K562 (cell line): ENCODE measurements at regions of chr12 and their contacts with region 1.

Region 1: DNA sequence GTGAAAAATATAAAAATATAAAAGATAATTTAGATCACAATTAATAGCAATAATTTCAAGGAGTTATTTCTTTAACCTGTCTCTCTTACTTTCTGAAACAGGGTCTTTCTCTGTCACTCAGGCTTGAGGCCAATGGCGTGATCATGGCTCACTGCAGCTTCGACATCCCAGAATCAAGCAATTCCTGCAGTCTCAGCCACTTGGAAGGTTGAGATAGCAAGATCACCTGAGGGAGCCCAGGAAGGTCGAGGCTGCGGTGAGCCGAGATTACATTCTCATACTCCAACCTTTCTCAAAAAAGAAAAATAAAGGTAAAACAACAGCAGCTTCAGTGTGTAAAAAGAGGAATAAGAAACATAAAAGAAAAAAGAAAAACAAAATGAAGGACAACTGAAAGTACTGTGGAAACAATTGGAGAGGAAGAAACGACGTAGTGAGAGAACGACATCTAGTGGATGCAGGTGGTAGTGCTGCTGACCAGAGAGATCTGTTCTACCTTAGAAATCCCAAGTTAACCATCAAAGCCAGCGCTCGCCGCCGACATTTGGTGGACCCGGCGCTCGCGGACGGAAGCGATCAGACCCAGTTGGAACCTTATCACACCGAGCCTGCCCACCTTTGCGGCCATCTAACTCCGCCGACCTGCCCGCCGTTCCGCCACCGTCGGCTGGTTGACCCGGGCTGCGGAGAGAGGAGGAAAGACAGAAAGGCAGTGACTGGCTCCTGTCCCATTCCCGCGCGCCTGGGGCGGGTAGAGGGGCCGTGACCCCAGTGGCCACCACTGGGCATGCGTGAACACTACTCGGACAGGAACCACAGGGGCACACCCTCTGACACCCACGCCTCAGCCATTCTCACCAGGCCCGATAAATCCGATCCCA is 196.1 kb downstream of the ALG10 start:
- DNase-seq: peak; percentile 46 to 78 (median 56)
- ATAC-seq: peak; percentile 90
- H3K4me3 ChIP-seq: 0 out of 2 replicates have a peak overlapping the region, but pooled peaks have one; percentile 19
- H3K27ac ChIP-seq: no peak overlapping the region
- H3K4me1 ChIP-seq: peaks cover 0 to 8% of the 10 kb centered on the region in 2 experiments; a peak in 2 of 5 replicates
- H3K27me3 ChIP-seq: no peaks in the 10 kb centered on the region; a peak in 1 of 5 replicates
- CTCF ChIP-seq: peak; percentile 79 to 91 (median 87)
- EP300 ChIP-seq: no peak
- POLR2A ChIP-seq: no peak
- RAD21 ChIP-seq: peak; percentile 68 to 88

Region 2: DNA sequence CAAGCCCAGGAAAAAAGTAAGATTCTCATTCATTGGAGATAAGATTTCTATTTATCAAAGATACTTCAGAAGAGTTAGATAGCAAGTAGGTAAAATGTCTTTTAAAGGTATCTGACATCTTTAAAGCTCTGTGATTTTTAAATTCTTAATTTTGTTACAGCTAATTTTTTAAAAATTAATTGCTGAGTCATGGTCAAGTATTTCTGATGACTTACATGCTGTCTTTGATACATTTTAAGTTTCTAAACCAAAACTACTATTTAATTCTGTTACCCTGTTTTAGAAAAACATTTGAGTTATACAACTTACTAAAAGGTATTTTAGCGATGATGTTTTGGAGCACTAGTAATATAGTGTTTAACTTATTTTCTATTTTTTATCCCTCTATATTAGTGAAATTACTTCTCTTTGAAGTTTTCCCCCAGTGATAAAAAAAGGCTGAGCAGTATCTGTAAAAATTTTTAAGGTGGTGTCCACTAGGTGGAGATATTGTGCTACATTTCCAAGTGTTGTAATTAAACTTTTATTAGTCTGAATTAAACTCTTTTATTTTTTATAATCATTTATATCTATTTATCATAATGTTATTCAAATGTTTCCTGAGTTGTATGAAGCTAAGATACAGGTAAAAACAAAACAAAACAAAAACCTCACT is 184.7 kb before region 1 on chr12:
- CTCF ChIA-PET with region 1: interaction called, 6 read pairs
- POLR2A ChIA-PET with region 1: no interaction called
- in situ Hi-C with region 1: no loop called
- intact Hi-C with region 1: loop called (anchors 1 kb)
- DNase-seq: peak; percentile 18 to 53 (median 24)
- ATAC-seq: no peak
- H3K4me3 ChIP-seq: no peak overlapping the region
- H3K27ac ChIP-seq: no peak overlapping the region
- H3K4me1 ChIP-seq: no peaks in the 10 kb centered on the region
- H3K27me3 ChIP-seq: no peaks in the 10 kb centered on the region
- CTCF ChIP-seq: peak in 2 of 3 experiments; percentile 27 to 59; a peak in 3 of 6 replicates
- EP300 ChIP-seq: no peak
- POLR2A ChIP-seq: no peak
- RAD21 ChIP-seq: peak; percentile 27 to 58; a peak in 2 of 4 replicates

Region 3: DNA sequence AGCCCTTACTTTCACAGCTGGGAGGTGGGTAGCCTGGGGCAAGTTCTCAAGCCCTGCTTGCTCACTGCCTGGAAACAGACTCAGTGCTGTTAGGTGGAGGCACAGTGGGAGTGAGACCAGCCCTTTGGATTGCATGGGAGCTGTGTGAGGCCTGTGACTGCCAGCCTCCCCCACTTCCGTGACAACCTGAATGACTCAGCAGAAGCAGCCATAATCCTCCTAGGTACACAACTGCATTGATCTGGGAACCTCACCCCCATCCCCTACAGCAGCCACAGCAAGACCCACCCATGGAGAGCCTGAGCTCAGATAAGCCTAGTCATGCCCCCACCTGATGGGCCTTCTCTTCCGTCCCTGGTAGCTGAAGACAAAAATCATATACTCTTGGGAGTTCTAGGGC is 169.7 kb before region 1 on chr12:
- CTCF ChIA-PET with region 1: no interaction called
- POLR2A ChIA-PET with region 1: no interaction called
- in situ Hi-C with region 1: loop called (anchors 5 kb)
- intact Hi-C with region 1: no loop called
- DNase-seq: no peak
- ATAC-seq: no peak
- H3K4me3 ChIP-seq: no peak overlapping the region
- H3K27ac ChIP-seq: no peak overlapping the region
- H3K4me1 ChIP-seq: no peaks in the 10 kb centered on the region
- H3K27me3 ChIP-seq: no peaks in the 10 kb centered on the region
- CTCF ChIP-seq: no peak
- EP300 ChIP-seq: no peak
- POLR2A ChIP-seq: no peak
- RAD21 ChIP-seq: no peak

Region 4: GRCh38 chr12:34292736-34293625 is 74.6 kb after region 1 on chr12:
- CTCF ChIA-PET with region 1: no interaction called
- POLR2A ChIA-PET with region 1: no interaction called
- in situ Hi-C with region 1: no loop called
- intact Hi-C with region 1: loop called (anchors 5 kb)
- DNase-seq: peak; percentile 37 to 73 (median 42)
- ATAC-seq: peak; percentile 88
- H3K4me3 ChIP-seq: no peak overlapping the region
- H3K27ac ChIP-seq: no peak overlapping the region
- H3K4me1 ChIP-seq: peaks cover 0 to 16% of the 10 kb centered on the region in 2 experiments; a peak in 2 of 5 replicates
- H3K27me3 ChIP-seq: peaks cover 6 to 29% of the 10 kb centered on the region in 2 experiments; a peak in 3 of 5 replicates
- CTCF ChIP-seq: peak; percentile 62 to 70 (median 63)
- EP300 ChIP-seq: no peak
- POLR2A ChIP-seq: no peak
- RAD21 ChIP-seq: peak in 1 of 2 experiments; percentile 48; a peak in 2 of 4 replicates

Region 5: GRCh38 chr12:34600592-34601462 is 382.4 kb after region 1 on chr12:
- CTCF ChIA-PET with region 1: no interaction called
- POLR2A ChIA-PET with region 1: no interaction called
- in situ Hi-C with region 1: loop called (anchors 10 kb)
- intact Hi-C with region 1: no loop called
- DNase-seq: peak in 2 of 4 experiments; percentile 1
- ATAC-seq: no peak
- H3K4me3 ChIP-seq: no peak overlapping the region
- H3K27ac ChIP-seq: no peak overlapping the region
- H3K4me1 ChIP-seq: no peaks in the 10 kb centered on the region
- H3K27me3 ChIP-seq: no peaks in the 10 kb centered on the region
- CTCF ChIP-seq: no peak
- EP300 ChIP-seq: no peak
- POLR2A ChIP-seq: no peak
- RAD21 ChIP-seq: no peak